Right ventricle myocardium inferior (tissue), 1 donor: ENCODE measurements at regions of chr3 and their contacts with region 1.

Region 1: GRCh38 chr3:150495563-150496168 is 50.6 kb downstream of the SERP1 start:
- DNase-seq: no peak
- ATAC-seq: no peak

Region 2: DNA sequence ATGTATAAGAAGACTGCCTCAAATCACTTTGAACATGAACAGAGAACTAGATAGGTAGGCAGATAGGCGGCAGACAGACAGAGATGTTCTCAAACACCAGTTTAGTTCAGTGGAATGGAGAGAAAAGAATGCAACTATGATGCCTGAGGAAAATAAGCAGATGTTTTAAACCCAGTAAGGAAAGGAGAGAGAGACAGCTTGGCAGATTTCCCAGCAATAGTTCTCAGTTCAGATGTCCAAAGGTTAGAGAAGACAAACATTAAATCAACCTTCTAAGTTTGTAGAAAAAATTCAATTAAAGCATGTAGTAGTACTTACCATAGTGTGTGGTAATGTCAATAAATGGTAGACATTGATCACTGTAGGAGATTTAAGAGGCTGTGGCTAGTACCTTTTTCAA is 315.3 kb before region 1 on chr3:
- intact Hi-C with region 1: no loop called
- DNase-seq: no peak
- ATAC-seq: no peak

Region 3: DNA sequence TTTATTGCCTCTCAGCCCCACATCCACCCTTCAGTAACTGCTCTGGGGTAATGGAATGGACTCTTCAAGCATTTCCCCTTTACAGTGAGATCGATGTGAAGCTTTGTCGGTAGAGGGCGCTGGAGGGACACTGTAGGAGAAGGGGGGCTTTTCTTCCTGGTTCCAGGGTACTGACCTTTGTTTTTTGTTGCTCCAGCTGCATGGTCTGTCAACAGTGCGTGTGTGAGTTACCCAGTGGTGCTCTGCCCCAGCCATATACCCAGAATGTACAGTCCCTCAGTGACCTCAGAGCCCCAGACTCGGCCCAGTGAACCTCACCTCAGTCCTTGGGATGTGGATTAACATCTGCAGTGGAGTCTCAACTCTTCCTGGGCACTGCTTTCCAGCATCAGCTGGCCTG is 267.8 kb before region 1 on chr3:
- intact Hi-C with region 1: loop called (anchors 2 kb)
- DNase-seq: no peak
- ATAC-seq: peak; percentile 8

Region 4: GRCh38 chr3:150286390-150287147 is 209.1 kb before region 1 on chr3:
- intact Hi-C with region 1: loop called (anchors 1 kb)
- DNase-seq: no peak
- ATAC-seq: no peak

Region 5: DNA sequence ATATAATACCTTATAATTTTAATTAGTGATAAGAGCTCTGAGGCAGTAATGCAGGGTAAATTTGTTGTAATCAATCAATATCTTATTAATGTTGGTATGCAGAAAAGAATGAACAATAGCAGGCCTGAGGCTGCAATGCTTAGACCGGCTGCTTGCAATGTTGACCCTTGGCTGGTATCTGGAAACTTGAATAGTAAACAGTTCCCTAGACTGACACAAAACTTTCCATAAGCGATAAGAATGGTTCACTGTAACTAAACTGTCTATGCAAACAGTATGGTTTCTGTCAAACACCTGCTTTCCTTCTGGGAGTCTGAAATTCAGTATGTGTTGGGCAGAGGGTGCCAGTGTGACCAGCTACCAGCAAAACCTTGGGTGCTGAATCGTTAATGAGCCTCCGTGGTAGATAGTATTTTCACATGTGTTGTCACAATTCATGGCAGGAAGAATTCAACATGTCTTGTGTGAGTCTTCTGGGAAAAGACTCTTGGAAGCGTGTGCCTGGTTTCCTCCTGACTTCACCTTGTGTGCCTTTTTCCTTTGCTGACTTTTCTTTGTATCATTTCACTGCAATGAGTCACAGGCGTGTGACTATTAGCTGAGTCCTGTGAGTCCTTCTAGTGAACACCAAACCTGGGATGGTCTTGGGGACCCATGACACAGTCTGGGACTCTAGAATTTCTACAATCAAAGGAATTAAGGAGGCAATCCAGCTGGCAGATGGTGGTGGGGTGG is 507.5 kb after region 1 on chr3:
- intact Hi-C with region 1: no loop called
- DNase-seq: no peak
- ATAC-seq: no peak